Natural killer cell (primary cell): ENCODE measurements at regions of chr19 and their contacts with region 1.

Region 1: DNA sequence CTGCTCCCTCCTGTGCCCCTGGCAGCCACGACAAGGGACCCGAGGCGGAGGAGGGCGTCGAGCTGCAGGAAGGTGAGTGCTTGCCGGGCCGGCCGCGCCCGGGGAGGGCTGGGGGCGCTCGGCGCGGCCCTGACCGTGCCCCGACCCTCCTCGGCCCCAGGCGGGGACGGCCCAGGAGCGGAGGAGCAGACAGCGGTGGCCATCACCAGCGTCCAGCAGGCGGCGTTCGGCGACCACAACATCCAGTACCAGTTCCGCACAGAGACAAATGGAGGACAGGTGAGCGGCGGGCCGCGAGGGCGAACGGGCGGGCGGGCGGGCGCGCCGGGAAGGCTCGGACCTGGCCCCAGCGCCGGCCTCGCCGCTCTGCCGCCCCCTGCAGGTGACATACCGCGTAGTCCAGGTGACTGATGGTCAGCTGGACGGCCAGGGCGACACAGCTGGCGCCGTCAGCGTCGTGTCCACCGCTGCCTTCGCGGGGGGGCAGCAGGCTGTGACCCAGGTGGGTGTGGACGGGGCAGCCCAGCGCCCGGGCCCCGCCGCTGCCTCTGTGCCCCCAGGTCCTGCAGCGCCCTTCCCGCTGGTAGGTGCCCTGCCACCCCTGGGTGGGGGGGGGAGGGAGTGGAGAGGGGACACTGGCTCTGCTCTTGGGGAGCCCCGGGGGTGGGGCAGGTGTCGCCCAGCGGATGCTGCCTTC is 807 bp downstream of the USF2 start:
- DNase-seq: peak; percentile 75 to 87
- ATAC-seq: peak; percentile 57 to 71 (median 59)
- H3K4me3 ChIP-seq: peak overlapping the region; percentile 21
- H3K4me3 Mint-ChIP-seq: peak overlapping the region; percentile 79
- H3K27ac ChIP-seq: peak overlapping the region; percentile 22
- H3K27ac Mint-ChIP-seq: peak overlapping the region; percentile 74 to 81
- H3K4me1 ChIP-seq: peaks cover 63% of the 10 kb centered on the region
- H3K4me1 Mint-ChIP-seq: peaks cover 33 to 57% of the 10 kb centered on the region in 2 donors
- H3K27me3 ChIP-seq: no peaks in the 10 kb centered on the region
- H3K27me3 Mint-ChIP-seq: no peaks in the 10 kb centered on the region
- CTCF ChIP-seq: peak; percentile 83

Region 2: GRCh38 chr19:35140962-35141637 is 128.5 kb before region 1 on chr19:
- intact Hi-C with region 1: loop called (anchors 1 kb)
- DNase-seq: peak; percentile 84 to 94
- ATAC-seq: peak; percentile 84 to 95 (median 86)
- H3K4me3 ChIP-seq: peak overlapping the region; percentile 32
- H3K4me3 Mint-ChIP-seq: peak overlapping the region; percentile 76
- H3K27ac ChIP-seq: no peak overlapping the region
- H3K27ac Mint-ChIP-seq: peak overlapping the region; percentile 50 to 80
- H3K4me1 ChIP-seq: peaks cover 46% of the 10 kb centered on the region
- H3K4me1 Mint-ChIP-seq: peaks cover 22 to 50% of the 10 kb centered on the region in 2 donors
- H3K27me3 ChIP-seq: peaks cover 11% of the 10 kb centered on the region
- H3K27me3 Mint-ChIP-seq: peaks cover 0 to 23% of the 10 kb centered on the region in 2 donors
- CTCF ChIP-seq: no peak

Region 3: DNA sequence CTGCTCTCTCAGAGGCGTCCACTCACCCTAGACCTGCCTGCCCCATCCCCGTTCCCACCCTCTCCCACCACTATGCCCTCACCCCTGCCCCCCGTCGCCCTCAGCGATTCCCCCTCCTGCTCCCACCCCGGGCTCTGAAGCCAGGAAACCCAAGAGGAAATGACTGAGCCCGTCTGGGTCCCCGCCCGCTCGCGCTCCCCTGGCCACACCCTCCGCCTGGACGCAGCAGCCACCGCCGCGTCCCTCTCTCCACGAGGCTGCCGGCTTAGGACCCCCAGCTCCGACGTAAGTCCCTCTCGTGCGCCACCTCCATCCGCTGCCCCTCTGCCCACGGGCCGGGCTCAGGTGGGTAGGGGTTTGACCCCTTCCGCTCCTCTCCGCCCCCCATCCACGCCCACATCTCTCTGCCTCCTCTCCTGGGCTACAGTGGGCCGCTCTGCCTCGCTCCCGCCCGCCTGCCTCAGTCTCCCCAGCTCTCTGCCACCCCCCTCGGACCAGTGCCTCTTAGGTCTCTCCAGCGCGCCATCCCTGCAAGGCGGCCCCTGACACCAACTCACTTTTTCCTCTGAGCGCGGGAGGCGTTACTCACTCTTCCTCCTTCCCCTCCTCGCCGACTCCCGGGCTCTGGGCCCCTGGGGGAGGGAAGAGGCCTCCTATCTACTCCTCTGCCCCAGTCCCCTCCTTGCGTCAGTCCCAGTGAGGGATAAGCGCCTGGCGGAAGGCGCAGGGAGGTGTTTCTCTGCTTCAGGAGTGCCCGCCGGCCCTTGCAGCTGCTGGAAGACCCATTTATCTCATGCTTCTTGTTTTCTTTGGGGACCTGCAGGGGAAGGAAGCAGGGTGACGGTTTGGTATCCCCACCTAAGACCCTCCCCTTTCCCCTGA is 114.8 kb before region 1 on chr19 and contains the start of gene FXYD5:
- intact Hi-C with region 1: loop called (anchors 5 kb)
- DNase-seq: peak; percentile 63 to 79
- ATAC-seq: peak; percentile 74 to 80 (median 75)
- H3K4me3 ChIP-seq: peak within 1 kb of the TSS; percentile 80
- H3K4me3 Mint-ChIP-seq: peak within 1 kb of the TSS; percentile 100
- H3K27ac ChIP-seq: peak within 1 kb of the TSS; percentile 80
- H3K27ac Mint-ChIP-seq: peak within 1 kb of the TSS; percentile 90 to 99
- H3K4me1 ChIP-seq: peaks cover 35% of the 10 kb centered on the region
- H3K4me1 Mint-ChIP-seq: peaks cover 48% of the 10 kb centered on the region in 2 donors
- H3K27me3 ChIP-seq: no peaks in the 10 kb centered on the region
- H3K27me3 Mint-ChIP-seq: no peaks in the 10 kb centered on the region
- CTCF ChIP-seq: no peak
- total RNA-seq, gene FXYD5: 226 to 270 (median 231) TPM

Region 4: GRCh38 chr19:35468637-35469036 is 199.1 kb after region 1 on chr19:
- intact Hi-C with region 1: loop called (anchors 10 kb)
- DNase-seq: peak; percentile 58 to 84
- ATAC-seq: peak; percentile 96 to 100 (median 100)
- H3K4me3 ChIP-seq: no peak overlapping the region
- H3K4me3 Mint-ChIP-seq: no peak overlapping the region
- H3K27ac ChIP-seq: no peak overlapping the region
- H3K27ac Mint-ChIP-seq: no peak overlapping the region
- H3K4me1 ChIP-seq: peaks cover 10% of the 10 kb centered on the region
- H3K4me1 Mint-ChIP-seq: peaks cover under 1 to 13% of the 10 kb centered on the region in 2 donors
- H3K27me3 ChIP-seq: no peaks in the 10 kb centered on the region
- H3K27me3 Mint-ChIP-seq: no peaks in the 10 kb centered on the region
- CTCF ChIP-seq: peak; percentile 72